ENCODE measurements at regions of chr9 and their contacts with region 1.

Region 1: GRCh38 chr9:3732077-3733038 is 206.6 kb upstream of the RFX3 start:
- DNase-seq: peak; percentile 88
- H3K4me3 ChIP-seq: no peak overlapping the region
- H3K27ac ChIP-seq: no peak overlapping the region
- H3K4me1 ChIP-seq: no peaks in the 10 kb centered on the region
- H3K27me3 ChIP-seq: peaks cover 0 to 2% of the 10 kb centered on the region in 2 experiments
- CTCF ChIP-seq: peak; percentile 58 to 66
- POLR2A ChIP-seq: no peak

Region 2: DNA sequence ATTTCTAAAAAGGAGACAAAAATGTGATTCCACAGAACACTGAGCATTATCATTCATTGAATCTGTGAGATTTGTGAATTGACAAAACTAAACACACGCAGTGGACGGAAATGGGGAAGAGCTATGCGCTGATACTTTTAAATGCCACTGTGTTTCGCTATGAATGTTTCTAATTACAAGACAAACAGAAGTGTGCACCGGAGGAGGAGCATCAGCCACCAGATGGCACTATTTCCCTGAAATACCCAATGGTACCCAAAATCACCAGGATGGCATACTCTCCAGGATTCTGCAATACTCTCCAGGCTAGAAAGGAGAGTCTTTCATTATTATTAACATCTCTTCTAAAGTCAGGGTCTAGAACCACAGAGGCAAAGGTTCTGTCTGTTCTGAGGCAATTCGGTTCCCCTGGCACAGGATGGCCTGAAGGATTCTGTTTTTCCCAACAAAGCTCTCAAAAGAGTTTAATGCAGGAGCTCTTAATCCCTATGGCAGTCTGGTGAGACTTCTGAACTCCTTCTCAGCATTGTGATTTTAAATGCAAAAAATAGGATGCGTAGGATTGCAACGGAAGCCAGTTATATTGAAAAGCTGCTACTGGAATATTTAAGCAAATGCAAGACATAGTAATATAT is 874.7 kb before region 1 on chr9:
- CTCF ChIA-PET with region 1: interaction called, 7 read pairs
- POLR2A ChIA-PET with region 1: no interaction called
- dilution Hi-C with region 1: no loop called
- intact Hi-C with region 1: loop called (anchors 5 kb)
- DNase-seq: peak; percentile 67
- H3K4me3 ChIP-seq: no peak overlapping the region
- H3K27ac ChIP-seq: no peak overlapping the region
- H3K4me1 ChIP-seq: no peaks in the 10 kb centered on the region
- H3K27me3 ChIP-seq: peaks cover 5 to 14% of the 10 kb centered on the region in 2 experiments
- CTCF ChIP-seq: peak; percentile 75 to 76
- POLR2A ChIP-seq: no peak

Region 3: DNA sequence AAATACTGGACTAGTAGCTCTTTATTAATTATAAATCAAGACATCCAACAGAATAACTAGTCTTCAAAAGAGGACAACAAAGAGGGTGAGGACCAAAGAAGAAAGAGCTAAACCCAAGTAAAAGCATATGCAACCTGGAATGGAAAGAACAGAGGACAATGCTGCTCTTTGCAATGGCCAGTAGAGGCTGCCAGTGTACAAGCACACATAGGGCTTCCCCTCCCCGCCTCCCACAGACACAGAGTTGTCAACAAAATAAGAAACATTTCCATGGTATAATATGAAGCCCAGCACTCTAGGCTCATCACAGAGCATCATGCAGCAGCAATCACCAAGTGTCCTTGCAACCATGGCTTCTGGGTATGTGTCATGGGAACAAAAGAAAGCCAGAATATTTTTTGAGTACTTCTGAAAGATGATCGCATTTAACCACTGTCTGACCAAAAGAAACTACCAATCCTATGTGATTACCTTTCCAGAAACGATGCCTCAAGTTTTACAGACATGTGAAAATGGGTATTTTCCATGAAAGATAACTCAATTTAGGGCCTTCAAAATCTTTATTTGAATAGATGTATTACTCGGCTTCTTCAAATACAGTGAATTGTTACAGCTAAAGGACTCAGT is 264.7 kb before region 1 on chr9:
- CTCF ChIA-PET with region 1: interaction called, 22 read pairs
- POLR2A ChIA-PET with region 1: no interaction called
- dilution Hi-C with region 1: no loop called
- intact Hi-C with region 1: loop called (anchors 1 kb)
- DNase-seq: peak; percentile 66
- H3K4me3 ChIP-seq: no peak overlapping the region
- H3K27ac ChIP-seq: no peak overlapping the region
- H3K4me1 ChIP-seq: peaks cover 13% of the 10 kb centered on the region
- H3K27me3 ChIP-seq: no peaks in the 10 kb centered on the region
- CTCF ChIP-seq: peak; percentile 94
- POLR2A ChIP-seq: no peak

Region 4: DNA sequence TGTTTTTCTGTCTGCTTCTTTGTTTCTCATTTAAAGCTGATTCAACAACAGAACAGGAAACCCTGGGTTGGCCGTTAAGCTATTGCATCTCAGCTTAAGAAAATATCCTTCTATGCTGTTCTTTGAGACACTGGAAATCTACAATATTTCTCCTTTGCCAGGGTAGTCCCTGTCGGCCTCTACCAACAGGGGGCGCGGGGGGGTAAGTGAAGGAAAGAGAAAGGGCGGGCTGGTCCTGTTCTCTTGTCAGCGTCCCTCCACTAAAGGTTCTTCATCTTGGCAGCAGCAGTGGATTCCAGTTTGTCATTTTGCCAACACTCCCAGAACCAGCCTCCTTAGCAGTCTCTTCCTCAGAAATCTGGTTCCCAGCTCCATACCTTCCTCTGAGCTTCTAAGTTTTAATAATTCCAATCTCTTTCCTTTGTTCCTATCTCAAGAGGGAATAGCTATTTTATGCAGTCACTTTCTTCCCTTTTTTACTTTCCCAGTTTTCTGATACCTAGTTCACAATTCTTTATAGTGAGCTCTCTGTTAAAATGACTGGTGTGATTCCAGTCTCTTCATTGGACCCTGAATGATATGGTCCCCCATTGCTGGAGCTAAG is 345.2 kb after region 1 on chr9:
- CTCF ChIA-PET with region 1: interaction called, 31 read pairs
- POLR2A ChIA-PET with region 1: no interaction called
- dilution Hi-C with region 1: no loop called
- intact Hi-C with region 1: loop called (anchors 1 kb)
- DNase-seq: peak; percentile 76
- H3K4me3 ChIP-seq: no peak overlapping the region
- H3K27ac ChIP-seq: no peak overlapping the region
- H3K4me1 ChIP-seq: peaks cover 2% of the 10 kb centered on the region
- H3K27me3 ChIP-seq: no peaks in the 10 kb centered on the region
- CTCF ChIP-seq: peak; percentile 83 to 85
- POLR2A ChIP-seq: no peak

Region 5: DNA sequence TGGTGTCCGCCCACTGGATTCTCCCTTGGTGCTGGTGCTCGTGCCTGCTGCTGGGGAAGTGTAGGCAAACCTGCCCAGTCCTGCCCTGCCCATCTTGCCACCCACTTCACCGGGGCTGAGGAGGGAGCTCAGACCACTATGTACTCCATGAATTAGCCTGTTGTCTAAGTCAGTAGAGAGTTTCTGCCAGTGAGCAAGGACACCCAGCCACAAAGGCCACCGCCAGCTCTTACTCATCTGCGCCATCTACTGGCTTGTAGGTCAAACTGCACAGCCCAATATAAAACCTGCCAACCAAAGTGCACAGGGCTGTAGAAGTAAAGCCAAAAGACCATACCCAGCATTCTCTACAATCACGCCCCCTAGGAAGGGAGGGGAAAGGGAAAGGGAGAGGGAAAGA is 465.2 kb after region 1 on chr9:
- CTCF ChIA-PET with region 1: interaction called, 10 read pairs
- POLR2A ChIA-PET with region 1: no interaction called
- dilution Hi-C with region 1: no loop called
- intact Hi-C with region 1: loop called (anchors 1 kb)
- DNase-seq: no peak
- H3K4me3 ChIP-seq: no peak overlapping the region
- H3K27ac ChIP-seq: no peak overlapping the region
- H3K4me1 ChIP-seq: no peaks in the 10 kb centered on the region
- H3K27me3 ChIP-seq: peaks cover 0 to 3% of the 10 kb centered on the region in 2 experiments
- CTCF ChIP-seq: peak; percentile 53 to 60
- POLR2A ChIP-seq: no peak

Region 6: DNA sequence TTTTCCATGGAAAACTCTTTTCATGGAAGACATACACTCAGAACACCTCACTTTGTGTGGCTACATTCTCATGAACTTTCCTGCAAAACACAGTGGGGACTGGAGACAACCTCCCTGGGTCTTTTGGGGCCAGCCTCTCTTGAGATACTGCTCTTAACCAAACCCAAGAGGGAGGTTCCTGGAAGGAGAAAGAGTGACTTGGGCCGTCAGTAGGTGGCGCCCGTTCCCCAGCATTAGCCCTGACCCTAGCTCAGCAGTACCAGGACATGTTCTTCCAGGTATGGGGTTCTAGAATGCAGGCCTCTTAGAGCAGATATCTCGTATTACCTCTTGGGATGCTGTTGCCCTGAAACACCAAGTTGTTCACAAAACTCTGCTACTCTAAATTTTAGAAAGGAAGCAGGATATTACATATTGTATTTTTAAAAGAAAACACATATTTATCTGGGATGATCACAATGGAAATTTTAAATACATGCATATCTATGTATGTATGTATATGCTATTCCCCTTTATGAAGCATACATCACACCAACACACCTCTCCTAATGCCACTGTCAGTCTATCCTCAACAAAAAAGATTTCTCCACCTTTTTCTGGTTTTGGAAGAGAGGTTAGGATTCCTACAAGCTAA is 583.3 kb after region 1 on chr9:
- CTCF ChIA-PET with region 1: interaction called, 9 read pairs
- POLR2A ChIA-PET with region 1: no interaction called
- dilution Hi-C with region 1: no loop called
- intact Hi-C with region 1: loop called (anchors 1 kb)
- DNase-seq: peak; percentile 85
- H3K4me3 ChIP-seq: no peak overlapping the region
- H3K27ac ChIP-seq: no peak overlapping the region
- H3K4me1 ChIP-seq: peaks cover 4% of the 10 kb centered on the region
- H3K27me3 ChIP-seq: no peaks in the 10 kb centered on the region
- CTCF ChIP-seq: peak; percentile 89 to 93
- POLR2A ChIP-seq: no peak

Region 7: GRCh38 chr9:4366591-4367330 is 634.4 kb after region 1 on chr9:
- CTCF ChIA-PET with region 1: interaction called, 28 read pairs
- POLR2A ChIA-PET with region 1: no interaction called
- dilution Hi-C with region 1: no loop called
- intact Hi-C with region 1: loop called (anchors 1 kb)
- DNase-seq: peak; percentile 53
- H3K4me3 ChIP-seq: no peak overlapping the region
- H3K27ac ChIP-seq: no peak overlapping the region
- H3K4me1 ChIP-seq: no peaks in the 10 kb centered on the region
- H3K27me3 ChIP-seq: peaks cover 2 to 5% of the 10 kb centered on the region in 2 experiments
- CTCF ChIP-seq: peak; percentile 74 to 81
- POLR2A ChIP-seq: no peak

Measured in endothelial cell of umbilical vein (primary cell).